Mammary epithelial cell (primary cell): ENCODE measurements at regions of chr13 and their contacts with region 1.

Region 1: DNA sequence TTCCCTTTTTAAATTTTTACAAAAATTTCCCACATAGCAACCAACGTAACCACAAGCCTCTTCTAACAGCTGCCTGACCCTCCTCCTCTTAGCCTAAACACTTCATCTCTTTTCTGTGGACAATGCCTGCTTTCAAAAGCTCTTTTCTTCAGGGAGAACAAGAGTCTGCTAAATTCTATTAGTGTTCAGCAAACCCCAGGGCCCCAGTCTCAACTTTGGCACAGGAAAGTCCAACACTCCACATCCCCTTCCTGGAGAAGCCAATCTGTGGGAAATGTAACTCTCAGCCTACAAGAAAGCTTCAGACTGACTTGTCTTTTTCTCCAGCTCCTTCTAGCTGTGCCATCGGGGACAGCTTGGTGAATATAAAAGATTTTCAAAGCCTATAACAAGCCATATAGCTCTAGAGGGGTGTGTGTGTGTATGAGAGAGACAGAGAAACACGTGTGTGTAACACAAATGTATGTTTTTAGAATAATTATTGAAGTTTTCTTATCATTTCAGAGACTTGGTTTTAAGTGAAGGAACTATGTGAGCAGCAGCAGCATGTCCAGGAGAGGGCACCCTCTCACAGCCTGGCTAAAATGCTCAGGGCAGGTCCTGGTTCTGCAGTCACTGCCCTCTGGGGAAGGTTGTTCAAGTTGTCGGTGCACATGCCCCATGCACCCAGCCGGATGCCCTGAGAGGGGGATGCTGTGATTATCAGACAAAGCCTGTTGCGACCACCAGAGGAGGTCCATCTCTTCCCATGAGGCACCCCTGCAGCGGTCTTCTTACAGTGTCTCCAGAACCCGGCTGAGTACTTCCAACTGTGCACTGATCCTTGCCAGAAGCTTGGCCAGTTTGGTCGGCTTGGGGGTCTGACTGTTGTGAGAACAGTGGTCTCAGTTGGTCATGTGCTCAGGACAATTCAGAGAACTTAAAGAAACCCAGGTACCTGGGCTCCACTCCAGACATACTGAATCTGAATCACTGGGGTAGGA is 34.4 kb downstream of the CCDC70 start:
- DNase-seq: peak; percentile 38
- H3K4me3 ChIP-seq: no peak overlapping the region
- H3K27ac ChIP-seq: no peak overlapping the region
- H3K4me1 ChIP-seq: no peaks in the 10 kb centered on the region
- H3K27me3 ChIP-seq: peaks cover 2% of the 10 kb centered on the region
- CTCF ChIP-seq: peak; percentile 85 to 91

Region 2: GRCh38 chr13:51935326-51936201 is 39.4 kb after region 1 on chr13:
- CTCF ChIA-PET with region 1: no interaction called
- dilution Hi-C with region 1: no loop called
- in situ Hi-C with region 1: no loop called
- intact Hi-C with region 1: no loop called
- DNase-seq: peak; percentile 19
- H3K4me3 ChIP-seq: no peak overlapping the region
- H3K27ac ChIP-seq: no peak overlapping the region
- H3K4me1 ChIP-seq: no peaks in the 10 kb centered on the region
- H3K27me3 ChIP-seq: no peaks in the 10 kb centered on the region
- CTCF ChIP-seq: peak; percentile 37 to 62

Region 3: GRCh38 chr13:52159321-52160086 is 263.3 kb after region 1 on chr13 and contains the start of gene NEK3:
- CTCF ChIA-PET with region 1: no interaction called
- dilution Hi-C with region 1: no loop called
- in situ Hi-C with region 1: no loop called
- intact Hi-C with region 1: loop called (anchors 1 kb)
- DNase-seq: peak; percentile 46
- H3K4me3 ChIP-seq: peak within 1 kb of the TSS; percentile 76 to 87 (median 85)
- H3K27ac ChIP-seq: peak within 1 kb of the TSS; percentile 51
- H3K4me1 ChIP-seq: peaks cover 21% of the 10 kb centered on the region
- H3K27me3 ChIP-seq: no peaks in the 10 kb centered on the region
- CTCF ChIP-seq: no peak
- total RNA-seq, gene NEK3: 7.3 to 9.1 TPM